HepG2 (cell line): ENCODE measurements at regions of chr11 and their contacts with region 1.

Region 1: DNA sequence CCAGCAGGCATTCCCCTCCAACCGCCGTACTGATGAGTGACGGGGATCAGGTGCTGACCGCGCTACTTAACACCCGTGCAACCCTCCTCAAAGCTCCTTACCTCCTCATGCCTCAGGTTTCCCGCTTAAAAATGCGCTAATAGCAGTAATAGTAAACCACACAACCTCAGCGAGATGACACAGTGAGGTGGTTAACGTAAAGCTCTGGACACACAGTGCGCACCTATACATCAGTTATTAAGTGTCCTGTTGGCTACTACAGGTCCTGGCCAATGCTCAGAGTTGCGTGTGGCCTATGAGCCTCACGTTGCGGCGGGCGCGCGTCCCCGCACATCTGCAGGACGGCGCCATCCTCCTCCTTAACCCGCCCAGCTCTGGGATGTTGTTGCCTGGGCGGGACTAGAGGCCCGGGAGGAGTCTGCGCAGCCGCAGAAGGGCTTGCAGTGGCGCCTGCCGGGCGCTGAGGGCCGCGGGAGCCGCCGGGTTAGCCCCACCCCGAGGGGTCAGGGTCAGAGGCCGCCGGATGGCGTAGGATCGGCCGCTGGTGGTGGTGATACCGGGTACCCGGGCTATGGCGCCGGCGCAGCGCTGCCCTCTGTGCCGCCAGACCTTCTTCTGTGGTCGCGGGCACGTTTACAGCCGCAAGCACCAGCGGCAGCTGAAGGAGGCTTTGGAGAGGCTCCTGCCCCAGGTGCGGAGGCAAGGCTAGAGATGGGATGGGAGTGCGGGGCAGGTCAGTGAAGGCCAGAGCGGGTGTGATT is at the start of gene CENATAC:
- DNase-seq: peak; percentile 91
- ATAC-seq: peak; percentile 95
- H3K4me3 ChIP-seq: peak within 1 kb of the TSS; percentile 79 to 91 (median 90)
- H3K27ac ChIP-seq: peak within 1 kb of the TSS; percentile 56
- H3K4me1 ChIP-seq: peaks cover 42% of the 10 kb centered on the region
- H3K27me3 ChIP-seq: no peaks in the 10 kb centered on the region; a peak in 1 of 5 replicates
- CTCF ChIP-seq: no peak
- EP300 ChIP-seq: no peak
- POLR2A ChIP-seq: peak; percentile 74 to 98
- RAD21 ChIP-seq: no peak
- total RNA-seq, gene CENATAC: 9.2 and 25.0 TPM in 2 replicates

Region 2: DNA sequence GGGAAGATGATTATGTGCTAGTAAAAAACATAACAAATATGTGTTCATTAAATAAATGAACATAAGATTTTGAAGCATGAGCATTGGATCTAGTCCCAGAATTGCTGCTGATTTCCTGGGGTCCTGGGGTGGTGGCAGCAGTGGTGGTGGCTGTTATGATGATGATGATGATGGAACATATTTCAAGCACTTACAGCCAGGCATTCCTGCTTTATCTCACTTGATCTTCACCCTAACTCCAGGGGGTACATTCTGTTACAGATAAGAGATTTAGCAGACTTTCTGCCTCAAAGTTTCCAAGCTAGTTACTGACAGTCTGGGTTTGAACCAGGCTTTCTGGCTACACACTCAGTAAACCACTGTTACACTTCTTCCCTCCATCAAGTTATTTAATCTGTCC is 25.9 kb after region 1 on chr11:
- CTCF ChIA-PET with region 1: no interaction called
- POLR2A ChIA-PET with region 1: interaction called, 66 read pairs
- in situ Hi-C with region 1: no loop called
- intact Hi-C with region 1: no loop called
- DNase-seq: no peak
- ATAC-seq: no peak
- H3K4me3 ChIP-seq: no peak overlapping the region
- H3K27ac ChIP-seq: peak overlapping the region; percentile 77
- H3K4me1 ChIP-seq: peaks cover 92% of the 10 kb centered on the region
- H3K27me3 ChIP-seq: peaks cover 0 to 3% of the 10 kb centered on the region in 2 experiments; a peak in 2 of 5 replicates
- CTCF ChIP-seq: no peak
- EP300 ChIP-seq: no peak
- POLR2A ChIP-seq: no peak
- RAD21 ChIP-seq: no peak

Region 3: GRCh38 chr11:119030329-119031049 is 32.7 kb after region 1 on chr11 and contains the start of gene SLC37A4:
- CTCF ChIA-PET with region 1: interaction called, 4 read pairs
- POLR2A ChIA-PET with region 1: interaction called, 12 read pairs
- in situ Hi-C with region 1: no loop called
- intact Hi-C with region 1: loop called (anchors 2 kb)
- DNase-seq: peak; percentile 95
- ATAC-seq: peak; percentile 63
- H3K4me3 ChIP-seq: peak within 1 kb of the TSS; percentile 74 to 82 (median 79)
- H3K27ac ChIP-seq: peak within 1 kb of the TSS; percentile 77
- H3K4me1 ChIP-seq: peaks cover 67% of the 10 kb centered on the region
- H3K27me3 ChIP-seq: no peaks in the 10 kb centered on the region; a peak in 1 of 5 replicates
- CTCF ChIP-seq: peak; percentile 97
- EP300 ChIP-seq: no peak
- POLR2A ChIP-seq: peak; percentile 14 to 83; a peak in 2 of 4 replicates
- RAD21 ChIP-seq: peak; percentile 82
- total RNA-seq, gene SLC37A4: 25.6 and 43.0 TPM in 2 replicates